K562 (cell line): ENCODE measurements at regions of chr5 and their contacts with region 1.

Region 1: DNA sequence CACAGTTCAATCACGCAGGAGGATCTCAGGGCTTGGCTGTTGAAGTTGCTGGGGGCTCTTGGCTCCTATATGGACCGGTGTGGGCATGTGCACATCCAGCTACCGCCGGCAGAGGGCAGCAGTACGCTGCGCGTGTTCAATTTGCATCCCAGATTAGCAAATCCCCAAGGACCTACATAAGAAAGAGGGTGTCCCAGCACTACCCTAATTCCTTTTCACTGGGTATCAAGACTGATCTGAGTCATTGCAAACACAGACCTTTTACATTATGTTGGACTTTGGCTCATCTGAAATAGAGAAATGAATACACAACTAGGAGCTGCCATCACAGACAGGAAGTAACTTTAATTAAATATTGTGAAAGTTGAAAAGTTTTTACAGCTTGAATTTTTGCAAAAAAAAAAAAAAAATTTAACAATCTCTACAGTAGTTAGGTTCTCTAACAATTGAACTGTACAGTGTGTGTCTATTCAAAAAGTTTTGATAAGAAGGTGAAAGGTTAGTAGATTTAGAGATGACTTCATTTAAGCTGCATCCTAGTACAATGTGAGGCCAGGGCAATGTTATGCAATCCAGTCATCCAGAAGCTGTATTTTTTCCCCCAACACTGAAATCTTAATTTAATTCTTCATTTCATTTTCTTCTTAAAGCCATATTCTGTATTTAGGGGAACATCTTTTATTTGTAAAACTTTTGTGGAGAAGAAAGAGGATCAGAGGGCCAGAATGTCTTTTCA is 404.0 kb downstream of the EBF1 start:
- DNase-seq: peak; percentile 70 to 77 (median 74)
- ATAC-seq: peak; percentile 93
- H3K4me3 ChIP-seq: no peak overlapping the region
- H3K27ac ChIP-seq: no peak overlapping the region
- H3K4me1 ChIP-seq: no peaks in the 10 kb centered on the region
- H3K27me3 ChIP-seq: no peaks in the 10 kb centered on the region; a peak in 1 of 5 replicates
- CTCF ChIP-seq: peak; percentile 80 to 90 (median 85)
- EP300 ChIP-seq: no peak
- POLR2A ChIP-seq: no peak
- RAD21 ChIP-seq: peak; percentile 88 to 89

Region 2: DNA sequence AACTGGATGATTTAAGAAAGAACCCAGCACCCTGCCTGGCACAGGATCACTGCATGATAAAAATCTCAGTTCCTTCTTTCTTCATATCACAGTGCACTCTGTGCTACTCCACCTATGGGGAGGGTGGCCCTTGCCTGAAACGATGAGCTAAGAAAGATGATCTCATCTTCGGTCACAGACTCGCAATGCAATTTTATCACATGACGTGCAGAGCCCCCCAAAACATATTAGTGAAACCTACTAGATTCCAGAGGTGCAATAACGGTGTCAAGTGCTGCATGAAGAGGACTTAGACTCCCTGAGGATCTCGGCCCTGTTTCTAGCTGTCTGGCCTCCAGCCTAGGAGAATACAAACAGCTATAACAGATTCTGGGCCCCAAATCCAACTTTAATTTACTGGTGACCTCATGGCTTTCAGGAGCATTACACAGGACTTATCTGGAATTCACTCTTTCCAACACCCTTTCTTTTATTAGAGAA is 300.0 kb after region 1 on chr5:
- CTCF ChIA-PET with region 1: no interaction called
- POLR2A ChIA-PET with region 1: no interaction called
- in situ Hi-C with region 1: no loop called
- intact Hi-C with region 1: loop called (anchors 5 kb)
- DNase-seq: no peak
- ATAC-seq: no peak
- H3K4me3 ChIP-seq: no peak overlapping the region
- H3K27ac ChIP-seq: no peak overlapping the region
- H3K4me1 ChIP-seq: no peaks in the 10 kb centered on the region
- H3K27me3 ChIP-seq: no peaks in the 10 kb centered on the region
- CTCF ChIP-seq: no peak
- EP300 ChIP-seq: no peak
- POLR2A ChIP-seq: no peak
- RAD21 ChIP-seq: no peak

Region 3: DNA sequence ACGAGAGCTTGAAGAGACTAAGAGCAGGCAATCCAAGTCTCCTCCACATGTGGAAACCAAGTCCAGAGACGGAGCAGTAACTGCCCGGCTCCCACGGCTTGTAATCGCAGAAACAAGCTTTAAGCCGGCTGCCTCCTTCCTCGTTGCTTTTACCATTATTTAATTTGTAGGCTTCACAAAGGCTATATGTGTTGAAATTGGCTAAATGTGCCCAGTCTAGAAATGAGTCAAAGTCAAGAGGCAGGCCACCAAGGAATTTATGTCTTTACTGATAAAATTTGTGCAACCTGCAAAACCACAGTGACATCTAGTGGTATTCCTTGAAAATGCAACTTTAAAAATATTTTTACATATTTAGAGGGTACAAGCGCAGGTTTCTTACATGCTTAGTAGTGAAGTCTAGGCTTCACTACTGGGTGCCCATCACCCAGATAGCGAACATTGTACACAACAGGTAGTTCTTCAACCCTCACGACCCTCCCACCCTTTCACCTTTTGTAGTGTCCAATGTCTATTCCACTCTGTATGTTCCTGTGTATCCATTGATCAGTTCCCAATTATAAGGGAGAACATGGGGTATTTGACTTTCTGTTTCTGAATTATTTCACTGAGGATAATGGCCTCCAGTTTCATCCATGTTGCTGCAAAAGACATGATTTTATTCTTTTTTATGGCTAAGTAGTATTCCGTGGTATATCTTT is 437.4 kb after region 1 on chr5:
- CTCF ChIA-PET with region 1: interaction called, 17 read pairs
- POLR2A ChIA-PET with region 1: no interaction called
- in situ Hi-C with region 1: no loop called
- intact Hi-C with region 1: loop called (anchors 1 kb)
- DNase-seq: peak; percentile 18 to 65 (median 38)
- ATAC-seq: peak; percentile 72
- H3K4me3 ChIP-seq: no peak overlapping the region
- H3K27ac ChIP-seq: no peak overlapping the region
- H3K4me1 ChIP-seq: peaks cover 0 to 3% of the 10 kb centered on the region in 2 experiments; a peak in 2 of 5 replicates
- H3K27me3 ChIP-seq: peaks cover 0 to 8% of the 10 kb centered on the region in 2 experiments; a peak in 4 of 5 replicates
- CTCF ChIP-seq: peak; percentile 59 to 94 (median 68); a peak in 5 of 6 replicates
- EP300 ChIP-seq: no peak
- POLR2A ChIP-seq: no peak
- RAD21 ChIP-seq: peak; percentile 90 to 94